Naive thymus-derived CD8-positive, alpha-beta T cell (primary cell): ENCODE measurements at regions of chr1 and their contacts with region 1.

Region 1: DNA sequence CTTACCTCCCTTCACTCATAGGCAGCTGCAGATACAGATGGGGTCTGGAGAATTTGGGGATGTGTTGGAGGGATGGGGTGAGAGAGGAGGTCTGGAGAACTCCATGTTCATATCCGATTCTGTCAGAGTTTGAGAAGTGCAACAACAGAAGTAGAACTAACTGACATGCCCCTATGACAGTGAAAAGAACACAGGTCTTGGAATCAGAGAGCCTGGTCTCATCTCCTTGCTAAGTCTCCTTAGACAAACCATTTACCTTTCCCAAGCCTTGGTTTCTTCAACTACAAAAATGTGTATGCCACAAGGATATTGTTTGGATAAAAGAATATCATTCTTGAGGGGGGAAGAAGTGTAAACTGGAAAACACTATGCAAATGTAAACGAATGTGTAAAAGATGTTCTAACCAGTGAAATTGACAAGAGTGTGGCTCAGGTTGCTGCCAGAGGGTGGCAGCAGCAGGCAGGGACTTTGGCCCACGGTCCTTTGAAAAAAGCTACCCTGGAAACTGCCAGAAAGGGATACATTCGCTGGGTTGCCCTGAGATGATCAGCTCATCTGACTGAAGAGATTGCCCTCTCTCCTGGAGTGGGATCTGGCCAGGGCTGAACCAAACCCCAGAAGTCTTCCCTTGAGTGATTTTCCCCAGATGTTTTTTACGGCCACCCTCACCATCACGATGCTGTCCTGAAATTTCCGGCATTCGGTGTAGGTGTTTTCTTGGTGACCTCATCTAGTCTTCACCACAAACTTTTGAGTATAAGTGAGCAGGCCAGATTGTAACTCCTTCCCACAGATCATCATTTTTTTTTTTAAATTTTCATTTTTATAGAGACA is 17.0 kb upstream of the CD2 start:
- DNase-seq: peak; percentile 46 to 87 (median 78)
- ATAC-seq: peak; percentile 57 to 62
- H3K4me3 Mint-ChIP-seq: peak overlapping the region; percentile 63 to 82 (median 76)
- H3K27ac Mint-ChIP-seq: peak overlapping the region; percentile 94 to 99 (median 98)
- H3K4me1 Mint-ChIP-seq: peaks cover 33 to 48% (median 45%) of the 10 kb centered on the region in 4 donors
- H3K27me3 Mint-ChIP-seq: no peaks in the 10 kb centered on the region

Region 2: GRCh38 chr1:116720364-116721041 is 16.7 kb before region 1 on chr1:
- POLR2A ChIA-PET with region 1: no interaction called
- DNase-seq: no peak
- ATAC-seq: no peak
- H3K4me3 Mint-ChIP-seq: no peak overlapping the region
- H3K27ac Mint-ChIP-seq: no peak overlapping the region
- H3K4me1 Mint-ChIP-seq: peaks cover 0 to 4% (median 2%) of the 10 kb centered on the region in 4 donors
- H3K27me3 Mint-ChIP-seq: peaks cover 0 to 2% (median 0%) of the 10 kb centered on the region in 5 donors

Region 3: DNA sequence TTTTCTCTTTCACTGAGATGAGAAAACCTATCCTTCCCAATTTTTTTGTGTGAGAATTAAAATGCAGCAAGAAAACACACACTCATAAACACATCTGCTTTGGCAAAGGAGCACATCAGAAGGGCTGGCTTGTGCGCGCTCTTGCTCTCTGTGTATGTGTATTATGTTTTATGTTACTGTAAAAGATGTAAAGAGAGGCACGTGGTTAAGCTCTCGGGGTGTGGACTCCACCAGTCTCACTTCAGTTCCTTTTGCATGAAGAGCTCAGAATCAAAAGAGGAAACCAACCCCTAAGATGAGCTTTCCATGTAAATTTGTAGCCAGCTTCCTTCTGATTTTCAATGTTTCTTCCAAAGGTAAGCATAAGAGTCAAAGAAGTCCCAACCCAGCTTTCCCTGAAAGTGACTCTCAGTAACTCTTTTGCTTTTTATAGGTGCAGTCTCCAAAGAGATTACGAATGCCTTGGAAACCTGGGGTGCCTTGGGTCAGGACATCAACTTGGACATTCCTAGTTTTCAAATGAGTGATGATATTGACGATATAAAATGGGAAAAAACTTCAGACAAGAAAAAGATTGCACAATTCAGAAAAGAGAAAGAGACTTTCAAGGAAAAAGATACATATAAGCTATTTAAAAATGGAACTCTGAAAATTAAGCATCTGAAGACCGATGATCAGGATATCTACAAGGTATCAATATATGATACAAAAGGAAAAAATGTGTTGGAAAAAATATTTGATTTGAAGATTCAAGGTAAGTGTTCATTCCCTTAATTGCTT is 17.2 kb after region 1 on chr1 and contains the start of gene CD2:
- POLR2A ChIA-PET with region 1: interaction called, 118 read pairs
- DNase-seq: peak in 9 of 10 donors; percentile 31 to 76 (median 58)
- ATAC-seq: peak; percentile 84 to 90
- H3K4me3 Mint-ChIP-seq: peak within 1 kb of the TSS; percentile 92 to 100 (median 98)
- H3K27ac Mint-ChIP-seq: peak within 1 kb of the TSS; percentile 96 to 99 (median 98)
- H3K4me1 Mint-ChIP-seq: peaks cover 22 to 42% (median 35%) of the 10 kb centered on the region in 4 donors
- H3K27me3 Mint-ChIP-seq: no peaks in the 10 kb centered on the region
- polyA plus RNA-seq, gene CD2: 197 to 240 (median 222) TPM

Region 4: GRCh38 chr1:116763787-116764465 is 26.7 kb after region 1 on chr1:
- POLR2A ChIA-PET with region 1: interaction called, 140 read pairs
- DNase-seq: peak in 4 of 10 donors; percentile 27 to 38 (median 32)
- ATAC-seq: peak; percentile 6 to 15
- H3K4me3 Mint-ChIP-seq: peak overlapping the region; percentile 68 to 91 (median 88)
- H3K27ac Mint-ChIP-seq: peak overlapping the region; percentile 97 to 99 (median 98)
- H3K4me1 Mint-ChIP-seq: peaks cover 58 to 98% (median 96%) of the 10 kb centered on the region in 4 donors
- H3K27me3 Mint-ChIP-seq: no peaks in the 10 kb centered on the region